ENCODE measurements at regions of chr20 and their contacts with region 1.

Region 1: DNA sequence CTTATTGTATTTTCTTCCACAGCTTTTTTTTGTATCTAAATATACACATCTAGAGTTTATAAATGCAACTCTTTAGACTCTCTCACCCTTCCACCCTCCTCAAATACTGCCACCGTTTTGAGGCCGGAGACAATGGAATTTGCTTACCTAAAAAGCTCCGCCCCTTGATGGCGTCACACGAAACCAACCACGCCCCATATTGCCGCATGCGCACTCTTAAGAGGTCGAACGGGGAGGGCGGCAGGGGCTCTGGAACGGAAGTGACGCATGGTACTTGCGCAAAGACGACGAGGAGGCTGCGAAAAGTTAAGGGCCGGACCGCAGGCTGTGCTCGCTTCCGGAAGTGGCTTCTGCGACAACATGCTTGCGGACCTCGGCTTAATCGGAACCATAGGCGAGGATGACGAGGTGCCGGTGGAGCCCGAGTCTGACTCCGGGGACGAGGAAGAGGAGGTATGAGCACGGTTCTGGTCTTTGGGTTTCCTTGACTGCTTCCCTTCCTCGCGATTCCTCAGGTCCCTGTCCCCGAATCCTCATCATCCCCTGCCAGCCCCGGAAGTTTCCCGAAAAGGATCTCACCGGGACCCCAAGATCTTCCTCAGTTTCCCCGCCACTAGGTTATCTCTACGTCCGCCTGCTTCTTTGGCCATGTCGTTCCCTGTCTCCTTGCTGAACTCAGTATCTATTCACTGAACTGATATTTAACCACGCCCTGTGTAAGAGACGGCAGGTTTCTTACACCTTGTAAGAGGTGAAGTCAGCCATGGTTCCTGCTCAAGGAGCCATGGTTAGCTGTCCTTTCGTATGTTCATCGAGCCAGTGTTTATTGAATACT is at the start of gene DDX27:
- DNase-seq: peak; percentile 99
- H3K4me3 Mint-ChIP-seq: peak within 1 kb of the TSS; percentile 94
- H3K27ac Mint-ChIP-seq: peak within 1 kb of the TSS; percentile 96
- H3K4me1 Mint-ChIP-seq: peaks cover 6% of the 10 kb centered on the region
- H3K27me3 Mint-ChIP-seq: no peaks in the 10 kb centered on the region
- CTCF ChIP-seq: no peak
- total RNA-seq, gene DDX27: 45.7 and 56.4 TPM in 2 replicates

Region 2: GRCh38 chr20:48635433-48636310 is 583.6 kb before region 1 on chr20:
- CTCF ChIA-PET with region 1: no interaction called
- POLR2A ChIA-PET with region 1: no interaction called
- intact Hi-C with region 1: loop called (anchors 10 kb)
- DNase-seq: peak; percentile 51
- H3K4me3 Mint-ChIP-seq: no peak overlapping the region
- H3K27ac Mint-ChIP-seq: no peak overlapping the region
- H3K4me1 Mint-ChIP-seq: no peaks in the 10 kb centered on the region
- H3K27me3 Mint-ChIP-seq: peaks cover 31% of the 10 kb centered on the region
- CTCF ChIP-seq: peak; percentile 83

Region 3: GRCh38 chr20:49132995-49133478 is 86.3 kb before region 1 on chr20:
- CTCF ChIA-PET with region 1: interaction called, 173 read pairs
- POLR2A ChIA-PET with region 1: interaction called, 19 read pairs
- intact Hi-C with region 1: loop called (anchors 1 kb)
- DNase-seq: peak; percentile 79
- H3K4me3 Mint-ChIP-seq: no peak overlapping the region
- H3K27ac Mint-ChIP-seq: no peak overlapping the region
- H3K4me1 Mint-ChIP-seq: peaks cover 6% of the 10 kb centered on the region
- H3K27me3 Mint-ChIP-seq: no peaks in the 10 kb centered on the region
- CTCF ChIP-seq: peak; percentile 55

Region 4: DNA sequence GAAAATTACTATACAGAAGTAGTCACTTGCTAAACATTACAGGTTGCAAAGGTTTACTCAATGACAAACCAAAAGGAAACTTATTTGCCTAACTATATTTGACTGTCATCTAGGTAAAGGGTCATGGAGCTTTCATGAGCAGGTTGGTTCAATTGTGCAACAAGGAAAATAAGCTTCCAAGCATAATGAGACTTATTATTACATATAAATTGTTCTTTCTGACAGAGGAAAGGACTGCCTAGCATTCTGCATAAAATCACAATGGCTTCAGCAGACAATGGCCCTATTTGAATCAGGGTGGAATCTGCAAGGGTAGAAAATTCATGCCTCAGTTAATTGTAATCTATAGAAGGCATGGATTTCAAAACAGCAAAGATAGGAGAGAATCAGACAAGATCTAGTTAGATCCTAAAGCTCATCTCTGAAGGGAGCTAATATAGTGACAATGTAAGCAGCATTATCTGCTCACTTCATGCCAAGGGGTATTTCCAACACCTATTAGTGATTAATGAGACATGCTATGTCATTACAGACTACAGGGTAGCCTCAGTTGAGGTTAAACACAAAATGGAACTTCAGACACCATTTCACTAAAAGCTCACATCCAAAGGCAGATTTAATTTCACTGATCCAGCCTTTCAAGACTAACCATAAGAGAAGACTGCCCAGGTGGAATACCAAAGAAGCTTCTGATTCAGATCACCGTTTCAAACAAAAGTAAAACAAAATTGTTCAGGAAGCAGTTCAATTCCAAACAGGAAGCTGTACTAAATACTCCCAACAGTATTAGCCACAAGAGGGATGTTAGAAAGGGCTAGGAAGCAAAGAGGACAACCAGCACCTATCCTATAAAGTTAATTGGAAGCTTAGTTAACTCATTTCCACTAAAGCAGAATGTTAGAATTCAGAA is 39.7 kb before region 1 on chr20:
- CTCF ChIA-PET with region 1: interaction called, 42 read pairs
- POLR2A ChIA-PET with region 1: interaction called, 150 read pairs
- intact Hi-C with region 1: no loop called
- DNase-seq: peak; percentile 11
- H3K4me3 Mint-ChIP-seq: no peak overlapping the region
- H3K27ac Mint-ChIP-seq: peak overlapping the region; percentile 19
- H3K4me1 Mint-ChIP-seq: peaks cover 8% of the 10 kb centered on the region
- H3K27me3 Mint-ChIP-seq: no peaks in the 10 kb centered on the region
- CTCF ChIP-seq: no peak

Region 5: DNA sequence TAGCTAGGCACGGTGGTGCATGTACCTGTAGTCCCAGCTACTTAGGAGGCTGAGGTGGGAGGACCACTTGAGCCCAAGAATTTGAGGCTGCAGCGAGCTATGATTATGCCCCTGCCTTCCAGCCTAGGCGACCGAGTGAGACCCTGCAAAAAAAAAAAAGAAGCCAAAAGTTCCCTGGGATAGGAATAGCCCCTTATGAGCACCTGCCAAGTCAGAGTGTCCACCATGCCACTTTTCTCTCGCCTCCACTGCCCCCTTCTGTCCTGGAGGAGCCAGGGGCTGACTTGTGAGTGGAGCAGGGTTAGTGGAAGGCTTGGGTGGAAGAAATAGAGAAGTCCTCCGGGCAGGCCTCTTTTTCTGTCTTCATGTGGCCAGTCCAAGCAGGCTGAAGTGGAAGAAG is 12.2 kb before region 1 on chr20:
- CTCF ChIA-PET with region 1: interaction called, 33 read pairs
- POLR2A ChIA-PET with region 1: interaction called, 5 read pairs
- intact Hi-C with region 1: no loop called
- DNase-seq: no peak
- H3K4me3 Mint-ChIP-seq: no peak overlapping the region
- H3K27ac Mint-ChIP-seq: no peak overlapping the region
- H3K4me1 Mint-ChIP-seq: no peaks in the 10 kb centered on the region
- H3K27me3 Mint-ChIP-seq: no peaks in the 10 kb centered on the region
- CTCF ChIP-seq: no peak

Region 6: DNA sequence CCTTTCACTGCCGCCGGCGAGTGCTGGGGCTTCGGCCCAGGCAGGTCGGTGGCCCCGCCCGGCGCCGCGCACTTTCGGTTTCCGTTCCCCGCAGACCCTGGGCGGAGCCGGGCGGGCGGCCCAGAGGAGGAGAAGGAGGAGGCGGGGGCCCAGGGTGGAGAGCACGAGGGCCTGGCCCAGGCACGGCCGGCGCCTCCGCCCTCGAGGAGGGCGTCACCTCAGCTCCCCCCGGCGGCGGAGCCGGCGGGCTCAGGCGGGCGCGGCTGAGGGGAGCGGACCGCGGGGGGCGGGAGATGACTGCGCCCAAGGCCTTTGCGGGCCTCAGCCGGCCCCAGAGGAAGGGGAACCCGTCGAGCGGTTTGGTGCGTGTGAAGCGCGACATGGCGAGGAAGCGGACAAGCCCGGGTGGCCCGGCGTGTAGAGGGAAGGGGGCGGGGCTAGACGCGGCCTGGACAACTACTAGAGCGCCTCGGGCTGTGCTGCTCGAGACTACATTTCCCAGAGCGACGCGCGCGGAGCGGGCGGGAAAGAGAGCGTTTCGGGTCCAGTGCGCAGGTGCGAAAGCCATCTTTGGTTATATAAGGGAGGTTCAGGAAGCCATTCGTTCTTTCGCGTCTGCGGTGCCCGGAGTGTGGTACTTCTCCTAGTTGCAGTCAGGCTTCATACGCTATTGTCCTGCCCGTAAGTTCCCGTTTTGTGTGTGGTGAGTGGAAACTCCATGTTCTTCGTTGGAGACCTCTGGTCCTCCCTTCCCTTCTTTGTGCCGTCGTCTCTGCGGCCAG is 58.9 kb after region 1 on chr20 and contains the start of gene ZNFX1:
- CTCF ChIA-PET with region 1: interaction called, 4 read pairs
- POLR2A ChIA-PET with region 1: interaction called, 60 read pairs
- intact Hi-C with region 1: no loop called
- DNase-seq: peak; percentile 99
- H3K4me3 Mint-ChIP-seq: peak within 1 kb of the TSS; percentile 81
- H3K27ac Mint-ChIP-seq: peak within 1 kb of the TSS; percentile 96
- H3K4me1 Mint-ChIP-seq: peaks cover 50% of the 10 kb centered on the region
- H3K27me3 Mint-ChIP-seq: no peaks in the 10 kb centered on the region
- CTCF ChIP-seq: no peak
- total RNA-seq, gene ZNFX1: 24.3 and 26.8 TPM in 2 replicates

Region 7: DNA sequence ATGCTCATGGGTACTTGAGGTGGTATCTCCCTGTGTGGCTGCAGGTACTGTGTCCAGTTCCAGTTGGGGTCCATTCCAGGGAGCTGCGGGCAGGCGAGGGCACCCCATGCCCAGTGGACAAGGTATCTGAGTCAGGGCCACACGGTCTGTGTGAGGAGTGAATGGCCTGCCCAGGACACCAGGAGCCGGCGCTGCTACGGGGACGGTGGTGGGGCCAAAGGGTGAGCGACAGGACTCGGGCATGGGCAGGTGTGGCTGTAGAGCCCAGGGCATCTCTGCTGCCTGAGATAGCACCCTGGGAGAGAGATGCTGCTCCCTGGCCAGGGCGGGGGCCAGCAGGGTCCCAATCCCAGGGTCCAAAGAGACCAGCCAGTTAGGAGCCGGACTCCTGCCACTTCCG is 116.2 kb after region 1 on chr20:
- CTCF ChIA-PET with region 1: no interaction called
- POLR2A ChIA-PET with region 1: no interaction called
- intact Hi-C with region 1: no loop called
- DNase-seq: no peak
- H3K4me3 Mint-ChIP-seq: no peak overlapping the region
- H3K27ac Mint-ChIP-seq: no peak overlapping the region
- H3K4me1 Mint-ChIP-seq: peaks cover 2% of the 10 kb centered on the region
- H3K27me3 Mint-ChIP-seq: peaks cover 27% of the 10 kb centered on the region
- CTCF ChIP-seq: no peak

Region 8: GRCh38 chr20:49356676-49357075 is 137.4 kb after region 1 on chr20:
- CTCF ChIA-PET with region 1: no interaction called
- POLR2A ChIA-PET with region 1: no interaction called
- intact Hi-C with region 1: no loop called
- DNase-seq: no peak
- H3K4me3 Mint-ChIP-seq: no peak overlapping the region
- H3K27ac Mint-ChIP-seq: no peak overlapping the region
- H3K4me1 Mint-ChIP-seq: peaks cover 12% of the 10 kb centered on the region
- H3K27me3 Mint-ChIP-seq: no peaks in the 10 kb centered on the region
- CTCF ChIP-seq: no peak